ENCODE measurements at regions of chr11 and their contacts with region 1.

Region 1: DNA sequence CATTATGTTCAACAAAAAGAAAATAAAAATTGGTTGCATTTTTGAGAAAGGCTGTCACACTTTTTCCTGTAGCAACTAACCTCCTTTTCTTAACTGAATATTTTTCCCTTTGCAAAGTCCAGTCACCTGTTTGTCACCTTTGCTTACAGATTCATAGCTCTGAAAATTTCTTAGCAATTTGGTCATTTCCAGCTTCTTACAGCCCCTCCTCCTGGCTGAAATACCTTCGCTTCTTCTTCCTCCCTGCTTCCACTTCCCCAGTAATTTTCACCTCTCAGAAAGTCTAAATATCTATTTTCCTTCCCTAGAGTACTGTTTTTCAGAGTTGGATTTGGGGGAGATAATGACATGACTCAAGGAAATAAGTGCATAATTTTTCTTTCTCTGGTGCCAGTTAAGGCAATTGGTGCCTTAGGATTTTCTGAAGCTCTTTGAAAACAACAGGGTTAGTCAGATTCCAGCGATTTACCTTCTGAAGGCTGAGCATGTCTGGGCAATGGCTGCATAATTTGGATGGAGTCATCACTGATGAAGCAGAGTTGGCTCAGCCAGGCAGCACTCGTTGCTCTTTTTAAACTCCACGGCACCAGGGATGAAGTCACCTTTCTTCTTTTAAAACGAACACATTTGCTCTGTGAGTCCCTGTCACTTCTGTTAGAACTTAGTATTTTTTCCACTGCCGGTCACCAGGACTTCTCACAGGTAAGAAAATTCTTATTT is 62.1 kb upstream of the AMOTL1 start:
- DNase-seq: peak; percentile 95
- H3K4me3 ChIP-seq: peak overlapping the region; percentile 61 to 87 (median 73)
- H3K27ac ChIP-seq: peak overlapping the region; percentile 99
- H3K4me1 ChIP-seq: peaks cover 29% of the 10 kb centered on the region
- H3K27me3 ChIP-seq: no peaks in the 10 kb centered on the region
- CTCF ChIP-seq: peak in 1 of 2 donors; percentile 12

Region 2: DNA sequence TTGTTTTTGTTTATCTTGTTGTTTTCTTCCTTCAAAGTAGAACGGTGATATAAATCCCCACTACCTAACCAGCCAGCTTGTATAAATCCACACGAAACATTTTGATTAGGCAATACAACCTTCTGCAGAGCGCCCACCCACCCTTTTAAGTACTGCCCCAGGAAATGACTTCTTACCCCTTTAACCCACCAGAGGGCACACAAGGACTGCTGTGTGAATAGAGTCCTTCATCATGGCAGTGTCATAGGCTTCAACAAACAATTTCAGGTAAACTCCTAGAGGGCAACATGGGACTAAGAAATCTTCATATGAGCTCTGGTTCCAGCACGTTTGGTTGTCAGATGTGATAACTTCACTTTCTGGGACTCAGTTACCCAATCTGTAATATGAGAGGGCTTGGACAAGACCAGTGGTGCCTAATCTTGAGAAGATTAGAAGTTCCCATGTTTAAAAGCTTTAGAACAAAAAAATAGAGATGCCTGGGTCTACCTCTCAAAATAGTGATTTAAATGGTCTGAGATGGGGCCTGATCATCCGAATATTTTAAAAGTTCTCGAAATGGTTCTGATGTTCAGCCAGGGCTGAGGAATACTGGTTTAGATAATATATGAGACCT is 82.8 kb before region 1 on chr11:
- CTCF ChIA-PET with region 1: interaction called, 13 read pairs
- dilution Hi-C with region 1: no loop called
- in situ Hi-C with region 1: loop called in 1 of 2 experiments (anchors 10 kb)
- intact Hi-C with region 1: loop called (anchors 2 kb)
- DNase-seq: peak; percentile 70
- H3K4me3 ChIP-seq: no peak overlapping the region
- H3K27ac ChIP-seq: no peak overlapping the region
- H3K4me1 ChIP-seq: no peaks in the 10 kb centered on the region
- H3K27me3 ChIP-seq: no peaks in the 10 kb centered on the region
- CTCF ChIP-seq: peak; percentile 91 to 94

Region 3: GRCh38 chr11:94673951-94674491 is 32.0 kb before region 1 on chr11:
- CTCF ChIA-PET with region 1: no interaction called
- dilution Hi-C with region 1: no loop called
- in situ Hi-C with region 1: no loop called
- intact Hi-C with region 1: loop called (anchors 1 kb)
- DNase-seq: peak; percentile 51
- H3K4me3 ChIP-seq: no peak overlapping the region
- H3K27ac ChIP-seq: no peak overlapping the region
- H3K4me1 ChIP-seq: peaks cover 66% of the 10 kb centered on the region
- H3K27me3 ChIP-seq: no peaks in the 10 kb centered on the region
- CTCF ChIP-seq: no peak

Region 4: DNA sequence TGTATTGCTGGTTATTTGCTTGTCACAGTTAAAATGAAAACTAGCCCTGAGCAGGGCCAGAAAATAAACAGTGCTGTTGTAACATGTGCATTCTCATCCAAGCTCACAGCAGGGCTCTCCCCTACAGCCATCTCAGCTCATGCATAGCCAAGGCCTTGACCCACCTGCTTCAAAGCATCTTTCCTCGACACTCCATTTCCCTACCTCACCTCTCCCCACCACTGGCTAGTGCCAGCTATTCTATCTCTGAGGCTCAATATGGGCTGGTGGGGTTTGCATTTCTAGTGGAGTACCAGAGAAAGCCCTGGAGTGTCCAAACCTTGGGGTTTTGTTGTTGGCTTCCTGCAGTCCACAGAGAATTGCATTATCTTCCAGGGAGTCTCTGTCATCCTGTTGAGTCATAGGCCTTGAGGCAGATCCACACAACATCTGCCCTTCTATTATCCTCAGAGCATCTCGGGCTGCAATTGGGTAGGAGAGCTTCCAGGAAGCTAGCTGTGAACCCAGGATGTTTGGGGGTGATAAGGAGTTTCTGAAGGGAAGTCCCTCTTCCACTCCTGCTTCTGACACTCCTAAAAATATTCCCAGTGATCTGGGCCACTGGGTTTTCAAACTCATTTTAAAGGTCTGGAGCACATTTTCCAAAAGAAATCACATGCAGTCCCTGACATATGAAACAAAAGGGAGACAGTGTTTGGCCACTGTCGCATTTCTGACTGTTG is 26.0 kb after region 1 on chr11:
- CTCF ChIA-PET with region 1: no interaction called
- dilution Hi-C with region 1: no loop called
- in situ Hi-C with region 1: no loop called
- intact Hi-C with region 1: loop called (anchors 2 kb)
- DNase-seq: peak; percentile 89
- H3K4me3 ChIP-seq: no peak overlapping the region
- H3K27ac ChIP-seq: peak overlapping the region; percentile 90
- H3K4me1 ChIP-seq: peaks cover 89% of the 10 kb centered on the region
- H3K27me3 ChIP-seq: no peaks in the 10 kb centered on the region
- CTCF ChIP-seq: no peak

Region 5: DNA sequence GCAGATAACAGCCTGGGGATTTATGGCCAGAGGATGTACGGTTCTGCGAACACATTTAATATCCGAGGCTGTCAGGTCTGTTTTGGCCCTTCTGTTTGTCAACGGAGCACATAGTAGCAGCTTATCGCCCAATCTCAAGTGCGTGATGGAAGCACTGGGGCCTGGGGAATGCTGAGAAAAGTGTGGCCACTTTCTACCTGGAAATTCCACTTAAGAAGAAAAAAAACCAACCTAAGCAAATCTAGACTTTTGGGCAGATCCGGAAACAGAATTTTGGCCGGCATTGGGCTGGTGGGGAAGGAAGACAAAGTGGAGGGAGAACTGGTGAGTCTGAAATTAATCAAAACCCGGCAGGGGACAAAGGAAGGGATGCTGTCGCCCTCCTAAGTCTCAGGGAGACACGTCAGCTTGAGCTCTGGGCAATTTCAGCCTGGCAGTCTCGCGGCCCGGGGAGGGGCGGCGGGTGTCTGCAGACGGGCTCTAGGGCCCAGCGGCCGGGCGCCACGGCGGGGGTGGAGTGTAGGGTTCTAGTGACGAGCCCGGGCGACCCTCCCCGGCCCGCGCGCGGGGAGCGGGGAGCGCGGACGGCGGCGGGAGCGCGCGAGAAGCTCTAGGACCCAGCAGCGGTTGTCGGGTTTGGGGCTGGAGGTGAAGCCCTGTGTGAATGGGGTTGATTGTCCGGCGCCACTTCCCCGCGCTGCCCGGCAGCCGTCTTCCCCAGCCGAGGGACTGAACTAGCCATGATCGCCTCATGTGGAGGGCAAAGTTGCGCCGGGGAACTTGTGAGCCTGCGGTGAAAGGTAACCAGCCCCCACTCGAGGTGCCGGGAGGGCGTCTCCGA is 61.9 kb after region 1 on chr11 and contains the start of gene AMOTL1:
- CTCF ChIA-PET with region 1: no interaction called
- dilution Hi-C with region 1: no loop called
- in situ Hi-C with region 1: no loop called
- intact Hi-C with region 1: loop called (anchors 1 kb)
- DNase-seq: peak; percentile 87
- H3K4me3 ChIP-seq: peak within 1 kb of the TSS; percentile 52 to 89 (median 64)
- H3K27ac ChIP-seq: peak within 1 kb of the TSS; percentile 91
- H3K4me1 ChIP-seq: peaks cover 47% of the 10 kb centered on the region
- H3K27me3 ChIP-seq: no peaks in the 10 kb centered on the region
- CTCF ChIP-seq: peak in 1 of 2 donors; percentile 23
- total RNA-seq, gene AMOTL1: 181 to 201 TPM

Region 6: GRCh38 chr11:94897330-94897768 is 191.3 kb after region 1 on chr11:
- CTCF ChIA-PET with region 1: no interaction called
- dilution Hi-C with region 1: no loop called
- in situ Hi-C with region 1: no loop called
- intact Hi-C with region 1: loop called (anchors 2 kb)
- DNase-seq: peak; percentile 21
- H3K4me3 ChIP-seq: no peak overlapping the region
- H3K27ac ChIP-seq: no peak overlapping the region
- H3K4me1 ChIP-seq: peaks cover 6% of the 10 kb centered on the region
- H3K27me3 ChIP-seq: no peaks in the 10 kb centered on the region
- CTCF ChIP-seq: peak; percentile 73 to 89